A673 (cell line): ENCODE measurements at regions of chr6 and their contacts with region 1.

Region 1: GRCh38 chr6:50187351-50187921 is 137.7 kb upstream of the DEFB112 start:
- DNase-seq: no peak
- H3K4me3 ChIP-seq: no peak overlapping the region
- H3K27ac ChIP-seq: no peak overlapping the region
- H3K4me1 ChIP-seq: no peaks in the 10 kb centered on the region
- H3K27me3 ChIP-seq: peaks cover 11% of the 10 kb centered on the region
- CTCF ChIP-seq: no peak

Region 2: DNA sequence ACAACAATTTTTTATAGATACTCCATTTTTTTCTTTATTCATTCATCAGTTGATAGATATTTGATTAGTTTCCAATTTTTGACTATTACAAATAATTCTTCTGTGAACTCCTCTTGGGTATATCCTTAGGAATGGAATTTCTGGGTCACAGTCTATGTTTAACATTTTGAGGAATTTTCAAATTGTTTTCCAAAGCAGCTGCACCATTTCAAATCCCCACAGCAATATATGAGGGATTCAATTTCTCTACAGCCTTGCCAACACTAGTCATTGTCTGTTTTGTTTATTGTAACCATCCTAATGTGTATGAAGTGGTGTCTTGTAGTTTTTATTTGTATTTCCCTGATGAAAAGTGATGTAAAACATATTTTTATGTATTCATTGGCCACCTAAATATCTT is 182.6 kb after region 1 on chr6:
- CTCF ChIA-PET with region 1: interaction called, 11 read pairs
- POLR2A ChIA-PET with region 1: no interaction called
- intact Hi-C with region 1: no loop called
- DNase-seq: no peak
- H3K4me3 ChIP-seq: no peak overlapping the region
- H3K27ac ChIP-seq: no peak overlapping the region
- H3K4me1 ChIP-seq: no peaks in the 10 kb centered on the region
- H3K27me3 ChIP-seq: no peaks in the 10 kb centered on the region
- CTCF ChIP-seq: no peak